ENCODE measurements at regions of chr1 and their contacts with region 1.

Region 1: DNA sequence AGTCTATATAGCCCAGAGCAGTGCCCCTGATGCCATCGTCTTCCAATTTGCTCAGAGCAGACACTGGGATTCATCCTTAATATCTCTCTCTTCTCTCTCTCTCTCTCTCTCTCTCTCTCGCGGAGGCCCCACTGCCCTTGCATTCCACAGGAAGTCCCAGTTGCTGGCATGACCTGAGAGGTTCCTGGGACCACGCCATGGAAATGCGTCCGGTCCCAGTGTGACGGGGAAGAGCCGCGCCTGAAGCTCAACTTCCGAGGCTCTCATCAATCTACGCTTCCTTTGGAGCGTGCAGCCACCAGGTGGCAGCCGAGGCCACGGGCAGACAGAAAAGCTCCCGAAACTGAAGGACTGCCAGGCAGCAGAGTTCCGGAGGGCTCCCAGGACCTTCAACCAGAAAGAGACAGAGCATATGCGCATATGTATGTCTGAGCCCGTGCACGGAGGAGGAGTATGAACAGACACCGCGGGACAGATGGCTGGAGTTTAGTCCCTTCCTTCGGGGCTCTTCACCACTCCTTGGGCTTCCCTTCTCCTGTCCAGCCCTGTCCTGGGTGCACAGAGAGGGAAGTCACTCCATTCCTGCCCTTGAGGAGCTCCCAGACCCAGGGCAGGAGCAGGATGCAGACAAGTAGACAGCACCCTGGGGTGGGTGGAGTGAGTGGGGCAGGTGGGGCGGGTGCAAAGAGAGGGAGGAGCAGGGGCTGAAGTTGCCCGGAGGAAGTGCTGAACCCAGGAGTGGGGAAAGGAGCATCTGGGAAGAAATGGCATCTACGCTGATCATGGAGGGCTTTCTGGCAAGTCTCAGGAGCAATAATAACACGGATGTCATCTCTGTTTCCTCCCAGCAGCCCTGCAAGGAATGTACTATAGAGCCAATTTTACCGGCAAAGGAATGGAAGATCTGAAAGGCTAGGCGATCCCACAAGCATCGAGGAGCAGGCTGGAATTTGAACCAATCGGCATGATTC is 10.5 kb downstream of the PDZK1IP1 start:
- DNase-seq: peak; percentile 98
- ATAC-seq: peak; percentile 77
- H3K4me3 ChIP-seq: peak overlapping the region; percentile 78
- H3K27ac ChIP-seq: peak overlapping the region; percentile 58
- H3K4me1 ChIP-seq: peaks cover 11% of the 10 kb centered on the region
- H3K27me3 ChIP-seq: no peaks in the 10 kb centered on the region
- CTCF ChIP-seq: peak; percentile 90

Region 2: DNA sequence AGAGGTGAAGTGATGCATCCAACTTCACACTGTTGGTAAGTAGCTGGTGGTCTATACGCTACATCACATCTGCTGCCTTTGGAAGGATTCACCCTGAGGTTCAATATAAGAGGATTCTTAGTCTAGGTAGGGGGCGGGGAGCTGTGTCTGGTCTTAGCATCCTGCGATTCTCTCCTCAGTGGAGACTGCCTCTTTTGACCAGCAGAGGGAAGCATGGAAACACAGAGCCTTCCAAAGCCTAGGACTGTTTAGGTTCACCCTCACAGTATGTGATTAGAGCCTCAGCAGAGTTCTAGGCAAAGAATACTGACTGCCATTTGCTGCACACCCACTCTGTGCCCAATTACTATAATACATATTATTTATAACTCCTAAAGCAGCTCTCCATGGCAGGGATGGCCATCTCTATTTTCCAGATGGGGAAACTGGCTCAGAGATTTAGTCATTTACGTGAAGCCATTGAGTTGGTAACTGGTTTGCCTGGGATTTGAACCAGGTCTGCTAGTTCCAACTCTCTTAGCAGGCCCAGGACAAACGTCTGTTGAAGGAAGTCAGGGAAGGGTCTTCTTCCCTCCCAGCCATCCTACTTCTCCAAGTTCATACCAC is 431.5 kb before region 1 on chr1:
- CTCF ChIA-PET with region 1: no interaction called
- POLR2A ChIA-PET with region 1: no interaction called
- intact Hi-C with region 1: loop called (anchors 1 kb)
- DNase-seq: peak; percentile 78
- ATAC-seq: peak; percentile 99
- H3K4me3 ChIP-seq: no peak overlapping the region
- H3K27ac ChIP-seq: no peak overlapping the region
- H3K4me1 ChIP-seq: peaks cover 19% of the 10 kb centered on the region
- H3K27me3 ChIP-seq: peaks cover 16% of the 10 kb centered on the region
- CTCF ChIP-seq: peak; percentile 84

Region 3: DNA sequence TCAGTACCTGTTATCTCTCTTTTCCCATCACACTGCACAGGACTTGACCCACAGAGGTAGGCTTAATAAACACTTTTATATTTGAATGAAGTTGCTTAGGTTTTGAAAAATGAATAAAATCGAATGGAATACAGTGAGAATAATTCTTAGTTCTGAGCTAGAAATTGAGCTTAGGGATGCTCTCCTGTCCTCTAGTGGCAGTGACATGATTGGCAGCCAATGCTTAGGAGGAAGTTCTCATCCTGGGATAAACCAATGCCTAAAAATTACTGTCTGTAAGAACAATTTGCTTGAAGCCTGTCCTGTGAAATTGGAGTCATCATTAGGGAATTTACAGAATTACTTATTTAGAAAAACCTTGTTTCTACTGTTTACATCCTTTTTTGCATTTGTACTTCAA is 177.1 kb before region 1 on chr1:
- CTCF ChIA-PET with region 1: no interaction called
- POLR2A ChIA-PET with region 1: no interaction called
- intact Hi-C with region 1: loop called (anchors 10 kb)
- DNase-seq: peak; percentile 36
- ATAC-seq: peak; percentile 37; the same call in 1 of the 2 replicates
- H3K4me3 ChIP-seq: no peak overlapping the region
- H3K27ac ChIP-seq: no peak overlapping the region
- H3K4me1 ChIP-seq: no peaks in the 10 kb centered on the region
- H3K27me3 ChIP-seq: peaks cover 19% of the 10 kb centered on the region
- CTCF ChIP-seq: peak; percentile 70

Region 4: GRCh38 chr1:47262787-47263413 is 83.6 kb after region 1 on chr1:
- CTCF ChIA-PET with region 1: interaction called, 19 read pairs
- POLR2A ChIA-PET with region 1: no interaction called
- intact Hi-C with region 1: loop called (anchors 1 kb)
- DNase-seq: peak; percentile 69
- ATAC-seq: peak; percentile 60; the same call in 1 of the 2 replicates
- H3K4me3 ChIP-seq: no peak overlapping the region
- H3K27ac ChIP-seq: no peak overlapping the region
- H3K4me1 ChIP-seq: no peaks in the 10 kb centered on the region
- H3K27me3 ChIP-seq: no peaks in the 10 kb centered on the region
- CTCF ChIP-seq: peak; percentile 82

Region 5: DNA sequence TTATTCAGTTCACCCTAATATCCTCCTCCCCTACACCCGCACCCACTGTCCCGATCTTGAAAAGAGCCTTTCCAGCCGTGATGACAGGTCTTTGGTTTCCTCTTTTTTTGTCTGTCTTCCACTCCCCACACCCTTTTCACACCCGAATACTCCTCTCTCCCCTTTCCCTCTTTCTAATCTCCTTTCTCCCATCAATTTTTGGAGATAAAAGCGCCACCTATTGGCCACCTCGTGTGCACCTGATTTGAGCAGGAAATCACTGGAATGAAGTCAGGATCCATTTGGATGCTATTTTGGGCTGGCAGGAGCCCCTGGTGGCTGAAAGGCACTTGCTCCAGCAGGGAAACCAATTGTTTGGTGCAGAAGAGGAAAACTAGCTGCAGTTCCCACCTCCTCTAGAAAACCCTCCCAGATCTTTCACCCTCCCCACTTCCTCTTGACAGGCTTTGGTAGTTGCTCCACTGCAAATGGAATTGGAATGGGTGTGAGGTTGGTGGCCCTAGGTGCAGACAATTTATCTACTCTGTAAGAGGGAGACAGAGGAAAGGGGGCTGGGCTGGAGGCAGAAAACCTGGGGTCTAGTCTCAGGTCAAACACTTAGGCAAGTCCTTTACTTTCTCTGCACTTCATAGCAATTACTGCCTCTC is 245.2 kb after region 1 on chr1:
- CTCF ChIA-PET with region 1: interaction called, 5 read pairs
- POLR2A ChIA-PET with region 1: no interaction called
- intact Hi-C with region 1: loop called (anchors 1 kb)
- DNase-seq: peak; percentile 82
- ATAC-seq: peak; percentile 90
- H3K4me3 ChIP-seq: no peak overlapping the region
- H3K27ac ChIP-seq: no peak overlapping the region
- H3K4me1 ChIP-seq: no peaks in the 10 kb centered on the region
- H3K27me3 ChIP-seq: no peaks in the 10 kb centered on the region
- CTCF ChIP-seq: peak; percentile 96

Measured in PC-3 (cell line).